ENCODE measurements at regions of chr3 and their contacts with region 1.

Region 1: DNA sequence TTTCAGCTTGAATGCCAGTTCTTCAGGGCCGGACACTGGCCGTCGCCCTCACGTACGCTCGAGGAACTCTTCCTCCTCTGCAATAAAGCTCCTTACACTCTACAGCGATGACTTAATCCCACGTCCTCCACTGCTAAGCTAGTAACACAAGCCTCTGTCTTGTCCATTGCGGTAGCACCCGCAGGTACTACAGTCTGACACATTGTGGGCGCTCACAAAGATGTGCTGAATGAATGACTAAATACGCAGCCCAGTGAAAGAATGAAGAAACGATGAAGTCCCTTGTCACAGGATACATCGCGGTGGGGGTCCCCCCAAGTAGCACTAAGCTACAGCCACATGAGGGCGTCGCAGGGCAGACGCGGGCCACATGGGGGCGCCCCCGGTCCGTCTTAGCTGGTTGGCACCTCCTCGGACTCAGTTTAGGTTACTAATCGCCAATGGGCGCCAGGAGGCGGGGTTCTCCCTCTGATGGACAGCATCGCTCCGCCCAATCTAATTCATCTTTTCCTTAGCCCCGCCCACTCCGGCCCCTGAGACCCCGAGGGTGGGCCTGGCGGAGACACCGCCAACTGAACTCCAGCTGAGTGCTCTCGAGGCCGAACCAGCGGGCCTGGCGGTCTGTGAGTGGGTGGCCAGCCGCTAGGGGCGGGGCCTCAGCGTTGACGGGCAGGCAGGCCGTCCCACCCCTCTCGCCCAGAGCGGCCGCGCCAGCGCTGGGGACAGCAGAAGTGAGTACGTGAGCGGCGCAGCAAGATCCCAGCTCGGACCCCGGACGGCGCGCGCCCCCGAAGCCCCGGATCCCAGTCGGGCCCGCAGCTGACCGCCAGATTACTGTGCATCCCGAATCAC is at the start of gene EPHB3:
- DNase-seq: peak; percentile 99
- ATAC-seq: peak; percentile 90
- H3K4me3 Mint-ChIP-seq: peak within 1 kb of the TSS; percentile 71
- H3K27ac Mint-ChIP-seq: no peak within 1 kb of the TSS
- H3K4me1 Mint-ChIP-seq: peaks cover 61% of the 10 kb centered on the region
- H3K27me3 Mint-ChIP-seq: peaks cover 87% of the 10 kb centered on the region
- CTCF ChIP-seq: peak; percentile 93
- total RNA-seq, gene EPHB3: 5.3 to 11.4 TPM (median 6.3 TPM) in 3 replicates

Region 2: DNA sequence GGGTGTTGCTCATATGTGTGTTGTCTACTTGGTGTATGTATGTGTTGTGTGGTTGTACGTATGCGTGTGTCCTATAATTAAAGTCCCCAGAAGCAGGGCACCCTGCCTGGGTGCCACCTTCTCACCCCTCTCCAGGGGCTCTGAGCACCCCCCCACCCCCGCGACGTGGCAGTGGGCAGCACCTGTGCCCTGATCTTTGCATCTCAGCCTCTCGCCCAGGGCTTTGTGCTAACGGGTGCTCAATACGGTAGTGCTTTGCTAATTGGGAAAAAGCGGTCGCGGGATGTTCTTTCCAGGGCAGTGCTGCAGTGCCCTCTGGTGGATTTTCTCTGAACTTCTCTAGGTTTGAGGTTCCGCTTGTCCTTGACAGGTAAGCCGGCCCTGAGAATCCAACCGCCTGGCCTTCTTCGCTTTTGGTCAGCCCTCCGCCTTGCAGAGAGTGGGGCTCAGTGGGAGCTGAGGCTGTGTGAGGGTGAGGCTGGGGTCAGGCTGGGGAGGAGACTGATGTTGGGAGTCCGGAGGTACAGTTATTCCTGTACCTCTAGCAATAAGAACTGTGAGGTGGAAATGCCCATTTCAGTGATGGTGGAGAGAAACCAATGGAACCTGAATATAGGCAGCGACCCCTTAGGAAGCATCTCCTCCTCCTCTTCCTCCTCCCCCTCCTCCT is 17.3 kb before region 1 on chr3:
- CTCF ChIA-PET with region 1: interaction called, 11 read pairs
- POLR2A ChIA-PET with region 1: no interaction called
- DNase-seq: peak; percentile 87
- ATAC-seq: peak; percentile 65
- H3K4me3 Mint-ChIP-seq: no peak overlapping the region
- H3K27ac Mint-ChIP-seq: no peak overlapping the region
- H3K4me1 Mint-ChIP-seq: peaks cover 26% of the 10 kb centered on the region
- H3K27me3 Mint-ChIP-seq: peaks cover 6% of the 10 kb centered on the region; the same call in 1 of the 2 replicates
- CTCF ChIP-seq: peak; percentile 86

Region 3: GRCh38 chr3:184597829-184598573 is 36.7 kb after region 1 on chr3:
- CTCF ChIA-PET with region 1: interaction called, 78 read pairs
- POLR2A ChIA-PET with region 1: interaction called, 4 read pairs
- DNase-seq: no peak
- ATAC-seq: no peak
- H3K4me3 Mint-ChIP-seq: no peak overlapping the region
- H3K27ac Mint-ChIP-seq: no peak overlapping the region
- H3K4me1 Mint-ChIP-seq: peaks cover 53% of the 10 kb centered on the region
- H3K27me3 Mint-ChIP-seq: peaks cover 61% of the 10 kb centered on the region
- CTCF ChIP-seq: no peak

Region 4: DNA sequence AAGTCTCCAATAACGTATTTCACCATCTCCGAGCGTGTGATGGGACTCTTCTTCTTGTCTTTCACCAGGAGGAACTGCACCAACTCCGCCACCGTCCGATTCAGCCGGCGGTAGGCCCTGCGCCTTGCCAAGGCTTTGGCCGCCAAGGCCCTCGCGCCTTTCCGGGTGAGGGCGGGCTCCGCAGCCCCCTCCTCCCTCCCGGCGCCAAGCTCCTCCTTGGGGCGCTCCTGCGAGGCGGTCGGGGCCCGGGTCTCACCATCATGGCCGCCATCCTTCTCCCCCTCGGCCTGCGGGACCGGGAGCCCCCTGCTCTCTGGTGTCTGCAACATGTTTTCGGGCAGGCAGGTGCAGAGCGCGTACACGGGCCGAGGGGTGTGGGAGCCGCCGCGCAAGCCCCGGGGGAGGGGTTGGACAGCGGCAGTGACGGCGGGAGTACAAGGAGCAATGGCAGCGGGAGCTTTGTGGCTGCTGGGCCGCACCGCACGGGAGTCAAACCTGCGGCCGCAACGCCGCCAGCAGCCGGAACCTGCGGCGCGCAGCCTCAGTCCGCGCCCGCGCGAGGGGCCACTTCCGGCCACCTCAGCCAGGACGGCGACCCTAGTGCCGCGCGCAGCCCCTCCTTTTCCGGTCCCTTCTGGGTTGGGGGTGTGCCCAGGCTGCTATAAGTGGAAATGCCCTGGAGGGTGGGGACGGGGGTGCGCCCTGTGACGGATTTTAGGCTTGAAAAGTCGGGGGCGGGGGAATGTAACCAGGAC is 150.4 kb after region 1 on chr3 and contains the start of gene MAGEF1:
- CTCF ChIA-PET with region 1: interaction called, 11 read pairs
- POLR2A ChIA-PET with region 1: interaction called, 4 read pairs
- DNase-seq: peak; percentile 92
- ATAC-seq: peak; percentile 94
- H3K4me3 Mint-ChIP-seq: peak within 1 kb of the TSS; percentile 94
- H3K27ac Mint-ChIP-seq: peak within 1 kb of the TSS; percentile 98
- H3K4me1 Mint-ChIP-seq: peaks cover 37% of the 10 kb centered on the region
- H3K27me3 Mint-ChIP-seq: no peaks in the 10 kb centered on the region; the same call in 1 of the 2 replicates
- CTCF ChIP-seq: no peak
- total RNA-seq, gene MAGEF1: 59.1 to 72.9 TPM (median 63.1 TPM) in 3 replicates

Region 5: GRCh38 chr3:184765730-184766074 is 204.4 kb after region 1 on chr3:
- CTCF ChIA-PET with region 1: interaction called, 13 read pairs
- POLR2A ChIA-PET with region 1: no interaction called
- DNase-seq: no peak
- ATAC-seq: no peak
- H3K4me3 Mint-ChIP-seq: no peak overlapping the region
- H3K27ac Mint-ChIP-seq: no peak overlapping the region
- H3K4me1 Mint-ChIP-seq: peaks cover 35% of the 10 kb centered on the region
- H3K27me3 Mint-ChIP-seq: no peaks in the 10 kb centered on the region; the same call in 1 of the 2 replicates
- CTCF ChIP-seq: no peak

Region 6: GRCh38 chr3:184796556-184797342 is 235.5 kb after region 1 on chr3:
- CTCF ChIA-PET with region 1: interaction called, 18 read pairs
- POLR2A ChIA-PET with region 1: no interaction called
- DNase-seq: no peak
- ATAC-seq: no peak
- H3K4me3 Mint-ChIP-seq: no peak overlapping the region
- H3K27ac Mint-ChIP-seq: no peak overlapping the region
- H3K4me1 Mint-ChIP-seq: peaks cover 11% of the 10 kb centered on the region
- H3K27me3 Mint-ChIP-seq: no peaks in the 10 kb centered on the region; the same call in 1 of the 2 replicates
- CTCF ChIP-seq: no peak

Measured in WTC11 (cell line).